RWPE1 (cell line): ENCODE measurements at regions of chrX and their contacts with region 1.

Region 1: DNA sequence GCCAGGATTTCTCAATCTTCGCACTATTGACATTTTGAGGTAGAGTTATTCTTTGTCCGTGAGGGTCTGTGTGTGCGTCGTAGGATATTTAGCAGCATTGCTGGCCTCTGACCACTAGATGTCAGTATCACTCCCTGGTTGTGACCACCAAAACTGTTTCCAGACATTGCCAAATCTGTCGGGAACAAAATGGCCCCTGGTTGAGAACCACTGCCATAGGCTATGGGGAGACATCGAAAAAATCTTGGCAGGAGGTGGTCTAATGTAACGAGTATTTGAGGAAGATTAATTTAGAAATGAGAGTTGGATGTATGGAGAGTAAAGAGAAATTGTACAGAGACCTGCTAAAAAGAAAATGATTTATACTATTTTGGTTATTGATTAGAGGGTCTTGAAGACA is 108.4 kb downstream of the DOCK11 start:
- DNase-seq: peak; percentile 31
- H3K27ac ChIP-seq: no peak overlapping the region
- CTCF ChIP-seq: peak; percentile 74

Region 2: DNA sequence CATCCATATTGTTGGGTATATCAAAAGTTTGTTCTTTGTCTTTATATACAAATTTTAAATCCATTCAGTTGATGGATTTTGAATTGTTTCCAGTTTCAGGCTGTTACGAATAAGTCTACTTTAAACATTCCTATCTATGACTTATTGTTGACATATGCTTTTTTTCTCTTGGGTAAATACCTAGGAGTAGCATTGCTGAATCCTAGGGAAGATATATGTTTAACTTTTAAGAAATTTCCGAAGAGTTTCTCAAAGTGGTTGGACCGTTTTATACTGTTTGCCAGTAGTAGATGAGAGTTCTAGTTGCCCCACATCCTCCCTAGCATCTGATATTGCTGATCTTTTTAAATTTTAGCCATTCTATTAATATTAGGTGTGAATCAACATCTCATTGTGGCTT is 62.6 kb after region 1 on chrX:
- CTCF ChIA-PET with region 1: interaction called, 10 read pairs
- POLR2A ChIA-PET with region 1: no interaction called
- DNase-seq: peak; percentile 0
- H3K27ac ChIP-seq: no peak overlapping the region
- CTCF ChIP-seq: no peak